AG04450 (cell line): ENCODE measurements at regions of chr13 and their contacts with region 1.

Region 1: GRCh38 chr13:78241278-78241919 is 322.8 kb upstream of the EDNRB start:
- DNase-seq: peak; percentile 2
- H3K4me3 ChIP-seq: no peak overlapping the region
- H3K27ac ChIP-seq: no peak overlapping the region
- H3K27me3 ChIP-seq: no peaks in the 10 kb centered on the region
- CTCF ChIP-seq: peak; percentile 71

Region 2: GRCh38 chr13:77372275-77372674 is 869.1 kb before region 1 on chr13:
- CTCF ChIA-PET with region 1: interaction called, 10 read pairs
- POLR2A ChIA-PET with region 1: no interaction called
- DNase-seq: no peak
- H3K4me3 ChIP-seq: no peak overlapping the region
- H3K27ac ChIP-seq: no peak overlapping the region
- H3K27me3 ChIP-seq: no peaks in the 10 kb centered on the region
- CTCF ChIP-seq: no peak

Region 3: DNA sequence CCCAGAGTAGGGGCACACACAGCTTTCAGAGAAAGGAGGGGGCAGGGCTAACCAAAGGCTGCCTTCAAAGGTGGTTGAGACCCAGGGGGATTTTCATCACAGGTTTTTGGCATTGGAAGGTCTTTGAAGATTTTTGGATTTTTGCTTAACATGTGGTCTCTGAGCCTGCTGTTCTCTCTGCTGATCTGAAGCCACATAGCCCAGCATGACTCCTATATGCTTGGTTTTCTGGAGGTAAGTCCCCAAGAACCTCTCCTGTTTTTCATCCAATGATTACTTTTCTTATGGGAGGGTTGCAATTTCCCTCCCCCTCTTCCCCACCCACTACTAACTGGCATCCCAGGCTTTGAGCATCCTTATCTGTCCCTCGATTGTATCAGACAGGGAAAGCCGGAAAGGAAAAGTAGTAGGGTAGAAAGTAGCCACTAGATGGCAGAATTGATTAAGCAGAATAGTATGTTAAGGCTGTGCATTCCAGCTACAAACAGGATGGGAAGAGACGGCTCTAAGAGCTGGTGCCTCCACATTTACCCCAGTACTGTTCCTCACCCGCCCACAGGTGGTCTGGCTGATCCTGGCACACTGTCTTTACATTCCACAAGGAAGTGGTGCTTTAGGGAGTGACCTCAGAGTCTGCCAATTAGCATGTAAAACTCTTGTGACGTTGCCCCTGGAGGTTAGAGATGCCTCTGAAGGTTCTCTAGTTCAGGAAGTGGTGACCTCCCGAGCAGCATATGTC is 103.8 kb before region 1 on chr13:
- CTCF ChIA-PET with region 1: interaction called, 17 read pairs
- POLR2A ChIA-PET with region 1: no interaction called
- DNase-seq: peak; percentile 49
- H3K4me3 ChIP-seq: no peak overlapping the region
- H3K27ac ChIP-seq: no peak overlapping the region
- H3K27me3 ChIP-seq: no peaks in the 10 kb centered on the region
- CTCF ChIP-seq: peak; percentile 79

Region 4: DNA sequence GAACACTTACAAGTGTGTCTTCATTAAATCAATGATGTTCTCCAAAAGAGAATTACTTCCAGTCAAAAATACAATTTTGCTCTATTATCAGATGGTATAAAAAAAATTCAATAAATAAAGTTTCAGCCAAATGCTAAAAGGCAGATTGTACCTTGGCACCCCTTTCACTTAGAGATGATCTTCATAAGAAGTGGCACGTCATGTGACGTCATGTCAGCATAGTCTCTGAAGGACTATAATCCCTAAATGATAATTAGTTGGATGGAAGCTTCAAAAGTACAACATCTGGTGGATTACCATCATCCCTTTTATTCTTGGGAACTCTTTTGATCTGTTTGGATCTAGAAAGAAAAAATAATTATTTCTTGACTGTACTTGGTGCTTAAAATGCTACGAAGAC is 12.7 kb after region 1 on chr13:
- CTCF ChIA-PET with region 1: interaction called, 17 read pairs
- POLR2A ChIA-PET with region 1: no interaction called
- DNase-seq: no peak
- H3K4me3 ChIP-seq: no peak overlapping the region
- H3K27ac ChIP-seq: no peak overlapping the region
- H3K27me3 ChIP-seq: no peaks in the 10 kb centered on the region
- CTCF ChIP-seq: no peak

Region 5: GRCh38 chr13:78978381-78978998 is 737.1 kb after region 1 on chr13:
- CTCF ChIA-PET with region 1: interaction called, 22 read pairs
- POLR2A ChIA-PET with region 1: no interaction called
- DNase-seq: peak; percentile 29
- H3K4me3 ChIP-seq: no peak overlapping the region
- H3K27ac ChIP-seq: no peak overlapping the region
- H3K27me3 ChIP-seq: no peaks in the 10 kb centered on the region
- CTCF ChIP-seq: peak; percentile 70